SK-N-SH (cell line): ENCODE measurements at regions of chr20 and their contacts with region 1.

Region 1: GRCh38 chr20:3710703-3711483 is 1.5 kb downstream of the SIGLEC1 start:
- DNase-seq: peak; percentile 93
- H3K4me3 ChIP-seq: peak overlapping the region in 1 of 2 experiments; percentile 43; a peak in 1 of 4 replicates
- H3K27ac ChIP-seq: no peak overlapping the region
- H3K4me1 ChIP-seq: no peaks in the 10 kb centered on the region
- H3K27me3 ChIP-seq: no peaks in the 10 kb centered on the region
- CTCF ChIP-seq: peak; percentile 91
- EP300 ChIP-seq: no peak
- RAD21 ChIP-seq: peak; percentile 76

Region 2: GRCh38 chr20:3551681-3552434 is 159.0 kb before region 1 on chr20:
- CTCF ChIA-PET with region 1: no interaction called
- POLR2A ChIA-PET with region 1: no interaction called
- DNase-seq: no peak
- H3K4me3 ChIP-seq: no peak overlapping the region
- H3K27ac ChIP-seq: no peak overlapping the region
- H3K4me1 ChIP-seq: no peaks in the 10 kb centered on the region
- H3K27me3 ChIP-seq: no peaks in the 10 kb centered on the region
- CTCF ChIP-seq: no peak
- EP300 ChIP-seq: no peak
- RAD21 ChIP-seq: no peak

Region 3: GRCh38 chr20:3563548-3564177 is 147.2 kb before region 1 on chr20:
- CTCF ChIA-PET with region 1: interaction called, 45 read pairs
- POLR2A ChIA-PET with region 1: no interaction called
- DNase-seq: peak; percentile 53
- H3K4me3 ChIP-seq: no peak overlapping the region; a peak in 1 of 4 replicates
- H3K27ac ChIP-seq: no peak overlapping the region
- H3K4me1 ChIP-seq: no peaks in the 10 kb centered on the region
- H3K27me3 ChIP-seq: no peaks in the 10 kb centered on the region
- CTCF ChIP-seq: peak; percentile 83
- EP300 ChIP-seq: no peak
- RAD21 ChIP-seq: peak; percentile 85

Region 4: DNA sequence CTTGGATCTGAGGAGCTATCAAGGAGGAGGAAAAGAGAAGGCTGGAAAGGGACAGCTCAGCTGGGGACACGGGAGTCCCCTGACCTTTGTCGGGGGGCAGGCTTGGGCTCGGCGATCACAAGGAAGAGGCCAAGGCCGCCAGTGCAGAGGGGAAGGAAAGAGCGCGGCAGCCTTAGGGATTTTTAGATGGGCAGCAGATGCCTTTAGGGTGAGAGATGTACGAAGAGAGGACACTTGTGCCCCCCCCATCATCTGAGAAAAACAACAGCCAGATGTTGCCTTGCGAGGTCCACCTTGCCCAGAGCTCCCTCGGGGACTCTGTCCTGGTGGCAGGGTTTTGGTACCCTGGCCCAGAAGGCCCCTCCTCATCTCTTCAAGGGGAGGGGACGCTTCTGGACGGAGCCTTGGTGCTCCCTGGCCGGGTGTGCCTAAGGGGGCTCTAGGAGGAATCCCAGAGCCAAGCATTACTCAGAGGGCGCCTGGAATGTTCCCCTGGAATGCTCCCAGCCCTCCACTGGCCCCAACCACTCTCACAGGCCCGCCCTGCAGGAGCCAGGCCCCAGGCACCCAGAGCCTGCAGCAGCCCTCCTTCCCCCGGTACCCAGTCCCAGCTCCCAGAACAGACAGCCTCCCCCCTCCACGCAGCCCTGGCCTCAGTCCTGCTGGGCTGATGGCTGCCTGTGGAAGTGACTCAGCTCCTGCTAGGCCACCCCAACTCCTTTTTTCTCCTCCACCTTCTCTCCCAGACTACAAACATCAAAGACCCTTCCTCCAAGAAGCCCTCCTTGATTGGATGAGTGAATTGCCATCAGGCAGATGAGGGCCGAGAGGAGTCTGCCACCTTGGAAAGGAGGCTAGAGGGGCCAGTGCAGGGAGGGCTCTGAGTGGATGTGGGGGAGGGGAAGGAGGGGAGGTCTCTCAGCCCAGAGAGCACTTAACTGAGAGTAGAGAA is 30.9 kb before region 1 on chr20:
- CTCF ChIA-PET with region 1: interaction called, 301 read pairs
- POLR2A ChIA-PET with region 1: interaction called, 3 read pairs
- DNase-seq: peak; percentile 59
- H3K4me3 ChIP-seq: no peak overlapping the region
- H3K27ac ChIP-seq: peak overlapping the region; percentile 13 to 62; a peak in 3 of 4 replicates
- H3K4me1 ChIP-seq: peaks cover 19 to 24% of the 10 kb centered on the region in 2 experiments; a peak in 2 of 4 replicates
- H3K27me3 ChIP-seq: peaks cover 15% of the 10 kb centered on the region
- CTCF ChIP-seq: no peak
- EP300 ChIP-seq: no peak
- RAD21 ChIP-seq: no peak

Region 5: GRCh38 chr20:3696200-3696599 is 14.7 kb before region 1 on chr20:
- CTCF ChIA-PET with region 1: interaction called, 58 read pairs
- POLR2A ChIA-PET with region 1: no interaction called
- DNase-seq: no peak
- H3K4me3 ChIP-seq: no peak overlapping the region
- H3K27ac ChIP-seq: no peak overlapping the region
- H3K4me1 ChIP-seq: no peaks in the 10 kb centered on the region
- H3K27me3 ChIP-seq: no peaks in the 10 kb centered on the region
- CTCF ChIP-seq: peak; percentile 55
- EP300 ChIP-seq: no peak
- RAD21 ChIP-seq: no peak

Region 6: DNA sequence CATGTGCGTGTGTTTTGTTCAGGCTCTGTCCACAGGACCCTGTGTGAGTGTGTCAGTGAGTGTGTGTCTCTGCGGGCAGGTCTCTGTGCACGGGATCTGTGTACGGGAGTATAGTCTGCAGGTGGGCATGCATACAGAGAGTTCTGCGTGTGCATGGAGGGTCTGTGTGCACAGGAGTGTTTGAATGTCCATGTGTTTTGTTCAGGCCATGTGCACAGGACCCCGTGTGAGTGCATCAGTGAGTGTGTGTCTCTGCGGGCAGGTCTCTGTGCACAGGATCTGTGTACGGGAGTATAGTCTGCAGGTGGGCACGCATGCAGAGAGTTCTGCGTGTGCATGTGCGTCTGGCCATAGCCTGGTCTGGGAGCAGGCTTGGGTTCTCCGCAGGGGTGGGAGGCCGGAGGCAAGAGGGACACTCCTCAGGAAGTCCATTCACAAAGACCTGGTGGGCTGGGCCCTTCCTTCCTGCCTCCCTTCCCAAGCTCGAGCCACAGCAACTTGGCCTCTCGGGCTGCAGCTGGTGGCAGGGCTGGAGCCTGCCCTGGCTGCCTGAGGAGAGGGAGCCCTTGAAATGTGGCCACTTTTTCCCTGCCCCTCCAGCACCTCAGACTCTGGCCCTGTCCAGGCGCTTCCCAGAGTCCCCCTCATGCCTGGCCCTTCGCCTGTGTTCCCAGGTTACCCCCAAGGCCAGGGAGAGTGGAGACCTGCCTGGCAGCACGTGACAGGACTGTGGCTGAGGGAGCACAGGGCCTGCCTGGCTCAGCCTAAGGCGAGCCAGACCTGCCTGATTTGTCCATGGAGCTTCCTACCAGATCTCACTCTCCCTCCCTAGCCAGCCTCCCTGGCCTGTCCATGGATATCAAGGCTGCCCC is 28.4 kb after region 1 on chr20:
- CTCF ChIA-PET with region 1: interaction called, 12 read pairs
- POLR2A ChIA-PET with region 1: no interaction called
- DNase-seq: no peak
- H3K4me3 ChIP-seq: no peak overlapping the region
- H3K27ac ChIP-seq: no peak overlapping the region; a peak in 1 of 4 replicates
- H3K4me1 ChIP-seq: peaks cover 0 to 22% of the 10 kb centered on the region in 2 experiments; a peak in 1 of 4 replicates
- H3K27me3 ChIP-seq: no peaks in the 10 kb centered on the region
- CTCF ChIP-seq: no peak
- EP300 ChIP-seq: no peak
- RAD21 ChIP-seq: no peak

Region 7: GRCh38 chr20:3753098-3753980 is 42.4 kb after region 1 on chr20:
- CTCF ChIA-PET with region 1: interaction called, 60 read pairs
- POLR2A ChIA-PET with region 1: no interaction called
- DNase-seq: peak; percentile 82
- H3K4me3 ChIP-seq: no peak overlapping the region
- H3K27ac ChIP-seq: no peak overlapping the region
- H3K4me1 ChIP-seq: peaks cover 0 to 6% of the 10 kb centered on the region in 2 experiments; a peak in 1 of 4 replicates
- H3K27me3 ChIP-seq: no peaks in the 10 kb centered on the region
- CTCF ChIP-seq: peak; percentile 77
- EP300 ChIP-seq: no peak
- RAD21 ChIP-seq: peak; percentile 72

Region 8: GRCh38 chr20:3767427-3768341 is 56.8 kb after region 1 on chr20 and contains the start of gene ADISSP:
- CTCF ChIA-PET with region 1: interaction called, 27 read pairs
- POLR2A ChIA-PET with region 1: no interaction called
- DNase-seq: peak; percentile 99
- H3K4me3 ChIP-seq: peak within 1 kb of the TSS; percentile 83 to 93
- H3K27ac ChIP-seq: peak within 1 kb of the TSS; percentile 94 to 95
- H3K4me1 ChIP-seq: peaks cover 9 to 22% of the 10 kb centered on the region in 2 experiments; a peak in 3 of 4 replicates
- H3K27me3 ChIP-seq: no peaks in the 10 kb centered on the region
- CTCF ChIP-seq: peak; percentile 28
- EP300 ChIP-seq: no peak
- RAD21 ChIP-seq: no peak
- polyA plus RNA-seq, gene ADISSP: 59.9 and 73.9 TPM in 2 replicates